Cardiac septum (tissue), 1 donor: ENCODE measurements at regions of chr19 and their contacts with region 1.

Region 1: DNA sequence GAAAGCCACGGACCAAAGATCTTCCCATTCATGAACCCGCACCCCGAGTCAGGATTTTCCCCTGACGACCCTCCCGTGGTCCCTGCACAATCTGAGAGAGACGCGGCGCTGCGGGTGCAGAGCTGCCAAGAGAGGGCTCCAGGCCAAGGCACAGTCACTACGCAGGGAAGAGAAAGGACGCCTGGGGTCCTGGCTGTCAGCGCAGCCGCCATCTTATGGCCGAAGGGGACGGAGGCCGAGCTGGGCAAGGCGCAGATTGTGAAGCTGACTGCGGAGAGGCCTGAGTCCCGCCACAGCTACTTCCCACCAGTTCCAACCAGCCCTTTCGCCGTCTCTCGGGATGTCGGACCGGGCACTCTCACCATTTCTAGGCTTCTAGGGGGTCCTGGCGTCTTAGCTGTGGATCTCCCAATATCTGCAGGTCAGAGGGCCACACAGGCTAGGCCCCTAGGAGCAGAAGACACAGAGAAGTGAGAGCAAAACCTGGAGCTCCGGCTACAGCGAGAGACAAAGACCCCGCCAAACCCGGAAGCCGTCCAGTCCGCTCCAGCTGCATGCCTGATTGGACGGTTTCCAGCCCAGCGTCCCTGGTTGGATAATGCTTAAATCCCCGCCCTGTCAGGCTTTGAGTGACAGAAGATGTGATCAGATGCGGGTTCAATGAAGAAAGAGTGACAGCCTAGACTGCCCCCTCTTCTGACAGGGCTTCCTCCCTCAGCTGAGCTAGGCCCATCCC is at the start of gene ZNF100:
- DNase-seq: peak; percentile 95
- total RNA-seq, gene ZNF100: 8.0 TPM

Region 2: DNA sequence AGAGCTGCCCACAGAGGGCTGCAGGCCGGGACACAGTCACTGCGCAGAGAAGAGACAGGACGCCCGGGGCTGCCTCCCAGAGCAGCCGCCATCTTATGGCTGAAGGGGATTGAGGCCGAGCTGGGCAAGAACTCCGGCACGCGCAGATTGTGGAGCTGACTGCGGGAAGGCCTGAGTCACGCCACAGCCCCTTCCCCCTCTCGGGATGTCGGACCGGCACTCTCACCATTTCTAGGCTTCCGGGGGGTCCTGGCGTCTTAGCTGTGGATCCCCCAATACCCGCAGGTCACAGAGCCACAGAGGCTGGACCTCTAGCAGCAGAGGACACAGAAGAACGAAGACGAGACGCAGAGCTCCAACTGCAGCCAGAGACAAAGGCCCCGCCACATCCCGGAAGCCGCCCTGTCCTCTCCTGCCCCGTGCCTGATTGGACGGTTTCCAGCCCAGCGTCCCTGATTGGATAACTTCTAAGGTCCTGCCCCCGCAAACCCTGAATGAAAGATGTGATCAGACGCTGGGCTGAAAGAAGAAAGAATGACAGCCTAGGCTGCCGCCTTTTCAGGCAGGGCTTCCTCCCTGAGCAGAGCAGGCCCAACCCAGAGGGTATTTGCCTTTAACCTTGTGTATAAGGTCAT is 68.7 kb after region 1 on chr19 and contains the start of gene ZNF43:
- intact Hi-C with region 1: loop called (anchors 10 kb)
- DNase-seq: peak; percentile 98
- total RNA-seq, gene ZNF43: 6.3 TPM

Region 3: DNA sequence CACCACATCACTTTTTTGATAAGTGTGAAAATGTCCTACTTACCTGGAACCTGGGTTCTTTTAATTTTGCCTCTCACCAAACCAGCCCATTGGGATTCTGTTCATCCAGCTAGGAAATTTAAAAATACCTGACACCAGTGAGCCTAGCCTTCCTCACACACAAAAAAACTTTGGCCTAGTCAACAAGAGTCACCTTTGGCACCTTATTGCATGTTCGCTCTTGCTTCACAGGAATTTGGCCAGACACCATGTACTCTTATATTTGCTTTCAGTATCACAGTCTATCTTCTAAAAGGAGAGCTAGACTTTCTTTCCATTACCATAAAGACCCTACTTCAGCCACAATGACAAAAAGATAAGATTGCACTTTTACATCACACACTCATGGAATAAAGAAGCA is 350.9 kb after region 1 on chr19:
- intact Hi-C with region 1: no loop called
- DNase-seq: no peak